Posterior cingulate gyrus (tissue), 11 donors: ENCODE measurements at regions of chr5 and their contacts with region 1.

Region 1: DNA sequence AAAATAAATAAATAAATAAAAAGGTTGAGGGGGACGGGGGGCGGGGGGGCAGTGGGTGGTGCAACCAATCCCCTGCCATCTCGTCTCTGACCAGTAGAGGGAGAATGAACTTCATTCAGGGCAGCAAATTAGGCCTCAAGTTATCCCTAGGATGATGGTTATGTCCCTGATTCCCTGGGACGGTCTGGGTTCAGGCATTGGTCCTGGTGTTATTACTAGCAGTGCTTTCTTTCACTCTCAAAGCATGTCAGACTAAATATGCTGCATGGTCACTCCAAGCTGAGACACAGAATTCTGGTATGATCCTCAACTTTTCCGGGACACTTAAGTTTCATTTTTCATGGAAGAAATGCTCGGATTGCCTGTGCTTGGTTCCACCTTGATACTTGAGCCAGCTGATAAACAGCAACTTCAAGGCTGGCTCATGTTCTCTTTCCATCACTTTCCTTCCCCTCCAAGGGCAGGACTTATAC is 59.4 kb downstream of the DAP start:
- DNase-seq: peak in 3 of 10 donors; percentile 20 to 51 (median 38)

Region 2: GRCh38 chr5:10409504-10409903 is 292.1 kb before region 1 on chr5:
- intact Hi-C with region 1: no loop called
- DNase-seq: no peak

Region 3: DNA sequence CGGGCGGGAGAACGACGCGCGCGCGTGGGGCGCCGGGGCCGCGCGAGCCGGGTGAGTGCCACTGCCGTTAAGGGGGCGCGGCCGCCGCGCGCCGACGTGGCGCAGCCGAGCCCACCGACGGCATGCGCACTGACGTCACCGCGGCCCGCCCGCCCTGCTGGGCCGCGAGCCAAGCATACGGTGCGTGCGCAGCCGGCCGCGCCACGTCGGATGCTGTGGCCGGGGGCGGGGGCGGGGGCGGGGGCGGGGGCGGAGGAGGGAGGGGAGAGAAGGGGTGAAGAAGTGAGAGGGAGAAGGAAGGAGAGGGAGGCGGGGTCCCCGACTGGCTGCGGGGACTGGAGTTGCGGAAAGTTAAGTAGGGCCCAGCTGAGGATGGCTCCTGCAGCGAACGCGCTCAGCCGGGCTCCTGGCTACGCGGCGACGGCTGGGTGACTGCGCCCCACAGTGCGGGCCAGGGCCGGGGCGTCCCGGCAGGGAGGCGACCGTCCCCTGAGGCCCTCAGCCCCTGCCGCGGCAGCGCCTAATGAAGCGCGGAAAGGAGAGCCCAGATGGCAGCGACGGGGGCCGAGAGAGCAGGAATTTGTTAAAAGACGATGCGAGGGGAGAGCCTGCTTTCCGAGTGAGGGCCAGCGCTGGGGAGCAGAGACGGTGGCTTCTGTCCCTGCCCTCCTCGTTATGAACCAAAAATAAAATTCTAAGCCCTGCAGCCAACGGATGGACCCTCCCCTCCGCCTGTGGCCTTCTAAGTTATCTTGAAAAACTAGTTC is 59.7 kb after region 1 on chr5 and contains the start of gene DAP:
- intact Hi-C with region 1: loop called (anchors 10 kb)
- DNase-seq: peak; percentile 55 to 96 (median 65)